Heart left ventricle (tissue), 16 donors: ENCODE measurements at regions of chr4 and their contacts with region 1.

Region 1: GRCh38 chr4:61443813-61444510 is 243.8 kb downstream of the ADGRL3 start:
- DNase-seq: no peak
- ATAC-seq: no peak
- H3K4me3 ChIP-seq: no peak overlapping the region
- H3K27ac ChIP-seq: no peak overlapping the region
- H3K4me1 ChIP-seq: peaks cover 0 to 14% (median 0%) of the 10 kb centered on the region in 12 donors
- H3K27me3 ChIP-seq: no peaks in the 10 kb centered on the region
- CTCF ChIP-seq: no peak
- POLR2A ChIP-seq: no peak

Region 2: GRCh38 chr4:61342061-61342460 is 101.9 kb before region 1 on chr4:
- intact Hi-C with region 1: loop called in 1 of 10 experiments (anchors 10 kb)
- DNase-seq: no peak
- ATAC-seq: no peak
- H3K4me3 ChIP-seq: no peak overlapping the region
- H3K27ac ChIP-seq: no peak overlapping the region
- H3K4me1 ChIP-seq: peaks cover 0 to 4% (median 0%) of the 10 kb centered on the region in 12 donors
- H3K27me3 ChIP-seq: no peaks in the 10 kb centered on the region
- CTCF ChIP-seq: no peak
- POLR2A ChIP-seq: no peak